Right ventricle myocardium inferior (tissue), 1 donor: ENCODE measurements at regions of chr21 and their contacts with region 1.

Region 1: GRCh38 chr21:34545079-34545884 is 33.3 kb upstream of the KCNE1 start:
- DNase-seq: no peak
- ATAC-seq: peak; percentile 65

Region 2: DNA sequence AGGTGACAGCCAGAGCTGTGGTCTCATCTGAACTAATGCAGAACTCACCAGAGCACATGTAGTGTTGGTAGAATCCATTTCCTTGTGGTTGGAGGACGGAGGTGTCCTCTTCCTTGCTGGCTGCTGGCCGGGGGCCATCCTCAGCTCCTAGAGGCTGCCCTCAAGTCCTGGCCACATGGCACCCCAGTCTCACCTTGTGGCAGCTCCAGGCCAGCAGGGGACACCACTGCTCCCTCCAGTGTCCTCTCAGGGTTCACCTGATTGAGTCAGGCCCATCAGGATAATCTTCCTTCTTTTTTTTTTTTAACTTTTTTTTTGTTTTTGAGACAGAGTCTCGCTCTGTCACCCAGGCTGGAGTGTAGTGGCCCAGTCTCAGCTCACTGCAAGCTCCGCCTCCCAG is 36.1 kb before region 1 on chr21:
- intact Hi-C with region 1: loop called (anchors 2 kb)
- DNase-seq: no peak
- ATAC-seq: no peak